Tibial artery (tissue), 4 donors: ENCODE measurements at regions of chr20 and their contacts with region 1.

Region 1: DNA sequence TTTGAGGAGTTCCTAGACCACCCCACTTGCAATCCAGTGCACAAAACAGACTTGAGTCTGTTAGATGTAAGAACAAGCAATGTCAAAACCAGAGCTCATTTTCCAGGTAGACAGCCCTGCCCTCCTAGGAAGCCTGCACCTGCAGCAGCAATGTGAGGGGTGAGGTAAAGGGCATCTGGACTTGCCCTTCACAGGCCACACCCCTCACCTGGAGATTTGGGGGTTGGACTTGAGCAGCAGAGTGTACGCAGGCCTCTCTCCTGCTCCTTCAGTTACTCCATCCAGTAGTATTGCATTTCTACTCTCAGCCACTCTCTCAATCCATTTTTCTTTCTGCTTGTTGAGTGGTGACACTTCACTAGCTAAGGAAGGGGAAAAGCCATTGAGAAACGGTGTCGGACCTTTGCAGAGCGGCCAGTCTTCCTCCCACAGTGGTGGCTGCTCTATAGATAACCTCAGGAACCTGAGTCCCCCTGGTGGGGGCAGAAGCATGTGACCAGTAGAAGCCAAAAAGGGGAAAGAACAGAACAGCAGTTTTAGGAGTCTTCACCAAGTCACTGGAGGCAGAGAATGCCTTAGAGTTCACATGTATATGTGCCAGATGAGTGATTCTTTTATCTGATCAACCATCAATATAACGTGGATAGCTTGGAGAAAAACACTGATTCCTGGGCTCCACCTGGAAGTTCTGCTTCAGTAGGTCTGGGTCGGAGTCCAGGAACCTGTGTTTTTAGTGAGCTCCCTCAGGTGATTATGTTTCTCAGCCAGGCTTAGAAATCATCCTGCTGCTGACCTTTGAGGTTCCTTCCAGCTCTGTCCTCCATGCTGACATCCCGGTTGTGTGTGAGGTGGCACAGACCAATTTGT is 28.0 kb downstream of the ARFGEF2 start:
- DNase-seq: no peak
- H3K4me3 ChIP-seq: no peak overlapping the region
- H3K27ac ChIP-seq: no peak overlapping the region
- H3K4me1 ChIP-seq: no peaks in the 10 kb centered on the region
- H3K27me3 ChIP-seq: no peaks in the 10 kb centered on the region
- CTCF ChIP-seq: no peak

Region 2: DNA sequence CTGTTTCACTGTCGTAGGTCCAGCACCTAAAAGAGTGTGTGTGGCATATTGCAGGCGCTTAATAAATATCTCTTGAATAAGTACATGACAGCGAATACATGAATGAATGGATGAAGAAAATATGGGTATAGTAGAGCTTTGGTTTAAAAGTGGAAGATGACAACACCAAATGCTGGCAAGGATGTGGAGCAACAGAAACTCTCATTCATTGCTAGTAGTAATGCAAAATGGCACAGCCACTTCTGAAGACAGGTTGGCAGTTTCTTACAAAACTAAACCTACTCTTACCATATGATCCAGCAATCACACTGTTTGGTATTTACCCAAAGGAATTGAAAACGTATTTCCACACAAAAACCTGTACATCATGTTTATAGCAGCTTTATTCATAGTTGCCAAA is 64.3 kb before region 1 on chr20:
- intact Hi-C with region 1: loop called (anchors 2 kb)
- DNase-seq: no peak
- H3K4me3 ChIP-seq: no peak overlapping the region
- H3K27ac ChIP-seq: no peak overlapping the region
- H3K4me1 ChIP-seq: no peaks in the 10 kb centered on the region
- H3K27me3 ChIP-seq: peaks cover 0 to 11% of the 10 kb centered on the region in 2 donors
- CTCF ChIP-seq: no peak

Region 3: GRCh38 chr20:49326026-49326425 is 376.5 kb after region 1 on chr20:
- intact Hi-C with region 1: no loop called
- DNase-seq: no peak
- H3K4me3 ChIP-seq: no peak overlapping the region
- H3K27ac ChIP-seq: no peak overlapping the region
- H3K4me1 ChIP-seq: peaks cover 0 to 12% (median 4%) of the 10 kb centered on the region in 4 donors
- H3K27me3 ChIP-seq: peaks cover 0 to 12% of the 10 kb centered on the region in 2 donors
- CTCF ChIP-seq: no peak